Activated T-helper 2 cell treated with anti-CD3 and anti-CD28 coated beads, Interferon-gamma antibody, Interleukin-2, Interleukin-4, amounts not matched to agents 10 μg/mL and 5 μg/mL and 100 μg/mL, durations not matched to agents 14 hours and 24 hours and 36 hours (primary cell): ENCODE measurements at regions of chr7 and their contacts with region 1.

Region 1: GRCh38 chr7:92682903-92683539 is 92.8 kb upstream of the FAM133B start:
- DNase-seq: no peak
- H3K4me3 Mint-ChIP-seq: peak overlapping the region; percentile 60
- H3K27ac Mint-ChIP-seq: peak overlapping the region; percentile 93
- H3K4me1 Mint-ChIP-seq: peaks cover 84% of the 10 kb centered on the region
- H3K27me3 Mint-ChIP-seq: no peaks in the 10 kb centered on the region

Region 2: GRCh38 chr7:92095380-92095779 is 587.6 kb before region 1 on chr7:
- intact Hi-C with region 1: no loop called
- DNase-seq: no peak
- H3K4me3 Mint-ChIP-seq: no peak overlapping the region
- H3K27ac Mint-ChIP-seq: no peak overlapping the region
- H3K4me1 Mint-ChIP-seq: no peaks in the 10 kb centered on the region
- H3K27me3 Mint-ChIP-seq: no peaks in the 10 kb centered on the region

Region 3: DNA sequence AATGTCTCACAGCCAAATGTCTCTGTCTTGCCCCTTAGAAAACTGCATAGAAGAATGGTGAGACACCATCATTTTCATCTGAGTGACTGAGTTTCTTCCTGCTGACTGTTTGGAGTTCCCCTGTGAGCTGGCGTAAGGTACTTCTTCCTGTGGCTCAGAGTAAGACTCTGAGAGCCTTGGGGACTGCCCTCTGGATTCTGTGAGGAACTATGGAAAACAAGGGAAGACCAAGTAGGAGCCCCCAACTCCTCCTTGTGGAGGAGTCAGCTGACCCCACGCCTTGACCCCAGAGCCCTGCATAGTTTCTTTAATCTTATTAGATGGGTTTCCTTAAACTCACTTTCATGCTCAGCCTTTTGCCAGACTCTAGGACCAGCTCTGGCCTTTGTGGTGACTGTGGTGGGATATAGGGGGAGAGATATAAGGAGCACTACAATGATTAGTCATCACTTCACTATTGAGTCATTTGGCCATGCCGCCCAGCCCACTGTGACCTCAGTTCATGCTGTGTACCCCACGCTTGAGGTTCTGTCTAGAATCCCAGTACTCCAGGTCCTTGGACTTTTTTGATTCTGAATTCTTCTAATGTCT is 41.0 kb before region 1 on chr7:
- intact Hi-C with region 1: loop called (anchors 5 kb)
- DNase-seq: peak; percentile 54
- H3K4me3 Mint-ChIP-seq: peak overlapping the region; percentile 47
- H3K27ac Mint-ChIP-seq: peak overlapping the region; percentile 97
- H3K4me1 Mint-ChIP-seq: peaks cover 88% of the 10 kb centered on the region
- H3K27me3 Mint-ChIP-seq: no peaks in the 10 kb centered on the region

Region 4: GRCh38 chr7:92708111-92709042 is 25.4 kb after region 1 on chr7:
- intact Hi-C with region 1: loop called (anchors 2 kb)
- DNase-seq: no peak
- H3K4me3 Mint-ChIP-seq: no peak overlapping the region
- H3K27ac Mint-ChIP-seq: peak overlapping the region; percentile 64
- H3K4me1 Mint-ChIP-seq: peaks cover 43% of the 10 kb centered on the region
- H3K27me3 Mint-ChIP-seq: no peaks in the 10 kb centered on the region